Ascending aorta (tissue), 2 donors: ENCODE measurements at regions of chr20 and their contacts with region 1.

Region 1: DNA sequence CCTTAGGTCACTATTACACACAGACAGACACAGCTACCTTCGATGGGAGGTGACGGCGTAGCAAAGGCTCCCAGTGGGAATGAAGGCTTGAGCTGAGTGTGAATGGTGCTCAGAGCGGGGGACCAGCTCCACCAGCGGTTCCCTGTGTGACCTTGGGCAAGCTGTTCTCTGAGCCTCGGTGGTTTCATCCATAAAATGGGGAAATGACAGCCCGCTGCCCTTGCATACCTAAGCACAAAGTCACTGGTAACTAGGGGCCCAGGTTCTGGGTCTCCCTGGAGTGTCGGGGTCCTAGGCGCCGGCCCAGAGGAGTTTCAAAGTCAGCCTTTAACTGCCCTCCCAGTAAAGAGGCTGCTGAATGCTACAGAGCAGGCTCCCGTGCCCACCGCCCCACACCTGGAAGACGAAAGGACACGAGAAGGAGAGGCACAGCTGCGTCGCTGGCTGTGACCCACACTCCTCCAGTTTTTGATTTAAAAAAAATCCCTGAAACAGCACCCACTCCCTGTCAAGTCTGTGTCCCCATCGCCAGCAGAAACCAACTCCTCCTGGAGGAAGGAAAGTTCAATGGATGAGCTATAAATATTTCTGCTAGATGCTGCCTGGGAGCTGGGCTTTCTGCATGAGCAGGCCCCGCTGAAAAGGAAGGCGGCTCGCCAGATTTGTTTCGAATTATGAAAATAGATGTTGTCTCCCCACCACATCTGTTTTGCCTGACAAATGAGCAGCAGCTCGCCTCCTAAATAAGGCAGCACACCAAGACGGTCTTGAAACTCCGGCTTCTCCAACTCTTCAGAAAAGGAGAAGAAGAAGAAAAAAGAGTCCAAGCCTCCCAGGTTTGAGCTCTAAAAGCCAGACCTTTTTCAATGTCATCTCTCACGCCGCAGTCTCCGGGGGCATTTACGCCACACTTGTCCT is 27.4 kb downstream of the PMEPA1 start:
- DNase-seq: no peak
- H3K4me3 ChIP-seq: peak overlapping the region; percentile 7 to 42
- H3K27ac ChIP-seq: peak overlapping the region; percentile 51 to 69
- H3K4me1 ChIP-seq: peaks cover 29 to 74% of the 10 kb centered on the region in 2 donors
- H3K27me3 ChIP-seq: no peaks in the 10 kb centered on the region
- CTCF ChIP-seq: no peak

Region 2: DNA sequence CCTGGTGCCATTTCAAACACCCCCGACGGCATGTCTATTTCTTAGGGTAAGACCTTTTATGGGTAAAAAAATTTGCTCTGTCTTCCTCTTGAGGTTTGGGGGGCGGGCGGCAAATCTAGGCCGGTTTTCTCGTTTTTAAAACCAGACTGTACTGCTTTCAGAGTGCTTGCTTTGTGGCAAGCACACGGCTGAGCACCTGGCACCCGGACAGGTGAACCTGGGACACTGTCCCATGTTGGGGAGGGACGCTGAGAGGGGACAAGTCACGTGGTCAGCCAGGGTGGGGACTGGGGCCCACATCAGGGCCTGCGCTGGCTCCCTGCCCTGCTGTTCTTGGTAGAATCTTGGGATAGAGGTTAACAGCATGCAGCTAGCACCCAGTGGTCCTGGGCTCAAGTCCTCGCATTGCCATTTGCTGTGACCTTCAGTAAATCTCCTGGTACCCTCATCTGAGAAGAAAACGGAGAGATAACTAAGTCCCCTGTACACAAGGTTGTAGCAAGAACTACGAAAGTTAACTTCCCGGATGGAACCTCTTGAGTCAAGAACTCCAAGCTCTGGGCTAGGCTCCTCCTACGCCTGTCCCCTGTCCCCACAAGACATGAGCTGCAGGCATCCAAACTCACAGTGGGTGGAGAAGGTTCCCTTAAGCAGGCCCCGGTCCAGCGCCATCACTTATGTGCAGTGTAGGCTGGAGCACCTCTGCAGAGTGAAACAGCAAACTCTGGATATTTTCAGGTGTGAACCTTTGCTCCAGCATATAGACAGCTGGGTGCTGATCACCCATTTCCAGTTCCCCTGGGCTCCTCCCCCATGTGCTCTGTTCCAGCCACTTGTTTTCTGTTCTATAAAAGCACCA is 14.3 kb before region 1 on chr20:
- intact Hi-C with region 1: loop called (anchors 2 kb)
- DNase-seq: no peak
- H3K4me3 ChIP-seq: no peak overlapping the region
- H3K27ac ChIP-seq: peak overlapping the region; percentile 17 to 32
- H3K4me1 ChIP-seq: peaks cover 10 to 71% of the 10 kb centered on the region in 2 donors
- H3K27me3 ChIP-seq: no peaks in the 10 kb centered on the region
- CTCF ChIP-seq: no peak